Mammary epithelial cell (primary cell): ENCODE measurements at regions of chr4 and their contacts with region 1.

Region 1: DNA sequence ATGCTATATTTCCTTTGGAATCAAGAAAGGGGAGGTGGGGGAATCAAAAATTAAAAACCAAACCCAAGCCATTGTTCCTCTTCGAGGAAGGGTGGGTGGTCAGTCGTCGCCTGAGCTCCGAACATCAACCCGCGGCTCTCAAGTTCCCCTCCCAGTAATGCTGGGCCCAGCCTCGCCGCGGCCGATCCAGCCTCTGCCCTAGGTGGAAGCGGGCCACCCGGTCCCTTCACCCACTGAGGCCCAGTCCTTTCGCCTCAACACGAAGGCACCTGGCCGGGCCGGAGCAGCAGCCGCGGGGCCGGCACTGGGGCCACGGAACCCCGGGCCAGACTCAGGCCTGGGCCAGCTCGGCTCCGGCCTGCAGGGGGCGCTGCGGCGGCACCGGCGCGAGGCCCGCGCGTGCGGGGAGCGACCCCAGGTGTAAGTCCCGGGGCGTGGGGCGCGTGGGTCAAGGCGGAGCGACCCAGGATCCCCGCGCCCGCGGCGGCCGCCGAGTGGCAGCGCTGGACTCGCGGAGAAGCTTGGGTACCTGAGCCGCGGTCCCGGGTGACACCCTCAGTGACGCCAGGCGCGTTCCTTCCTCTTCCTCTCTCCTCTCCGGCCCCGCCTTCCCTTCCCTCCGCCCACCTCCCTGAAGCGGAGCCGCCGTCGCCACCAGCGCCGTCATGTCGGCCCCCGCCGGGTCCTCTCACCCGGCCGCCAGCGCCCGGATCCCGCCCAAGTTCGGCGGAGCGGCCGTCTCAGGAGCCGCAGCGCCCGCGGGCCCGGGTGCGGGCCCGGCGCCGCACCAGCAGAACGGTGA is at the start of gene SEC24B:
- DNase-seq: peak; percentile 81
- H3K4me3 ChIP-seq: peak within 1 kb of the TSS; percentile 79 to 94 (median 86)
- H3K27ac ChIP-seq: peak within 1 kb of the TSS; percentile 86
- H3K4me1 ChIP-seq: peaks cover 19% of the 10 kb centered on the region
- H3K27me3 ChIP-seq: no peaks in the 10 kb centered on the region
- CTCF ChIP-seq: peak; percentile 53 to 59
- total RNA-seq, gene SEC24B: 22.0 to 34.7 TPM

Region 2: GRCh38 chr4:109444182-109444844 is 10.9 kb after region 1 on chr4:
- CTCF ChIA-PET with region 1: no interaction called
- dilution Hi-C with region 1: no loop called
- in situ Hi-C with region 1: no loop called
- intact Hi-C with region 1: loop called (anchors 1 kb)
- DNase-seq: no peak
- H3K4me3 ChIP-seq: no peak overlapping the region
- H3K27ac ChIP-seq: no peak overlapping the region
- H3K4me1 ChIP-seq: peaks cover 41% of the 10 kb centered on the region
- H3K27me3 ChIP-seq: no peaks in the 10 kb centered on the region
- CTCF ChIP-seq: no peak

Region 3: DNA sequence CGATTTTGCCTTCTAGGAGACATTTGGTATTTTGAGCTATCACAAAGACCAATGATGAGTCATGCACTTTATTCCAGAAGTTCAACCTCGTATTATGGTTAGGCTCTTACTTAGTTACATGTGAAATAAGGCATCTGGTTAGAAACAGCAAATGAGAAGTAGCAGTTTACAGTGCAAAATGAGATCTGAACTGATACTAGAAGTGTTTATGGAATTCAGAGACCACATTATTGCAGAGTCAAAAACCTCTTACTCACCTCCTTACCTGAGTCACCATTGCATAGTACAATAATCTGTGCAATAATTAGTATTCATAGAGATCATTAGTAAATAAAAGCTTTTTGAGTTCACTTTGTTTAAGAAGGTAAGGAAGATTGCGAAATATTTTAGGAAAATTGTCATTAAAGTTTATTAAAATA is 38.9 kb after region 1 on chr4:
- CTCF ChIA-PET with region 1: no interaction called
- dilution Hi-C with region 1: no loop called
- in situ Hi-C with region 1: no loop called
- intact Hi-C with region 1: loop called (anchors 2 kb)
- DNase-seq: peak; percentile 91
- H3K4me3 ChIP-seq: no peak overlapping the region
- H3K27ac ChIP-seq: peak overlapping the region; percentile 72
- H3K4me1 ChIP-seq: peaks cover 11% of the 10 kb centered on the region
- H3K27me3 ChIP-seq: no peaks in the 10 kb centered on the region
- CTCF ChIP-seq: no peak

Region 4: GRCh38 chr4:109511414-109511813 is 78.0 kb after region 1 on chr4:
- CTCF ChIA-PET with region 1: no interaction called
- dilution Hi-C with region 1: loop called (anchors 5 kb)
- in situ Hi-C with region 1: no loop called
- intact Hi-C with region 1: no loop called
- DNase-seq: no peak
- H3K4me3 ChIP-seq: no peak overlapping the region
- H3K27ac ChIP-seq: no peak overlapping the region
- H3K4me1 ChIP-seq: no peaks in the 10 kb centered on the region
- H3K27me3 ChIP-seq: no peaks in the 10 kb centered on the region
- CTCF ChIP-seq: no peak

Region 5: GRCh38 chr4:109559983-109560686 is 126.7 kb after region 1 on chr4 and contains the start of gene MCUB:
- CTCF ChIA-PET with region 1: no interaction called
- dilution Hi-C with region 1: no loop called
- in situ Hi-C with region 1: no loop called
- intact Hi-C with region 1: loop called (anchors 1 kb)
- DNase-seq: peak; percentile 90
- H3K4me3 ChIP-seq: peak within 1 kb of the TSS; percentile 64 to 68 (median 68)
- H3K27ac ChIP-seq: peak within 1 kb of the TSS; percentile 65
- H3K4me1 ChIP-seq: peaks cover 12% of the 10 kb centered on the region
- H3K27me3 ChIP-seq: no peaks in the 10 kb centered on the region
- CTCF ChIP-seq: no peak
- total RNA-seq, gene MCUB: 8.3 to 20.3 TPM

Region 6: GRCh38 chr4:109648266-109648996 is 215.0 kb after region 1 on chr4:
- CTCF ChIA-PET with region 1: no interaction called
- dilution Hi-C with region 1: no loop called
- in situ Hi-C with region 1: no loop called
- intact Hi-C with region 1: loop called (anchors 2 kb)
- DNase-seq: no peak
- H3K4me3 ChIP-seq: no peak overlapping the region
- H3K27ac ChIP-seq: no peak overlapping the region
- H3K4me1 ChIP-seq: no peaks in the 10 kb centered on the region
- H3K27me3 ChIP-seq: no peaks in the 10 kb centered on the region
- CTCF ChIP-seq: no peak